ENCODE measurements at regions of chr16 and their contacts with region 1.

Region 1: DNA sequence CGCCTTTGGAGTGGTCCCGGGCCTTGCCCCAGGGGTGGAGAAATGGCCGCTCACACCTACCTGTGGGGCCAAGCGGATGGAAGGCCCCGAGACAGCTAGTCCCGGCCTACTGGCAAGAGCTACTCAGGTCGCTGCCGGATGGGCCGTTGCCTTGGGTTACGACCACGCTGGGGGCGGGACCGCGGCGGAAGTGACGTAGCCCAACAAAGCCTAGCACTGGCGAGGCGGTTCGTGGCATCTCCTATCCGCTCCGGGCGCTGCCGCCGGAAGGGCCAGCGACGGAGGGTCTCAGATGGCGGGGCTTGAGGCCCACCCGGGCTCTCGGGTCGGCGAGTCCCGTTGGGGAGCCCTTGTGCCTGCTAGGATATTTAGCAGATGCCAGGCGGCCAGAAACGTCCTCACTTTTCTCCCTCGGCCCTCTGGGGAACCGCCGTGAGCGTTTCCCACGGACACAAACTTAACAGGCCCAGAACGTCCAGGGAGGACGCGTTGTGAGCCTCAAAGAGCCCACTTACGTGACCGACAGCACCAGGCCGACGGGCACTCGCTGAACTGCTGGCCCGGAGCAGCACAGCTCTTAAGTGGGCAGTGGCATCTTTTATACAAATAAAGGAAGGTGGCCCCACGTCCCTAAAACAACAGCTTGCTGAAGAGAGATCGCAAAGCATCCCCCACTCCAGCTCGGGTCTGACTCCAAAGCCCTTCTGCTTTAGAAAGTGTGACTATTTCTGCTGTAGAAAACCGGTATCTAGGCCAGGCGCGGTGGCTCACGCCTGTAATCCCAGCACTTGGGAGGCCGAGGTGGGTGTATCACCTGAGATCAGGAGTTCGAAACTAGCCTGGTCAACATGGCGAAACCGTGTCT is at the start of gene C16orf46:
- DNase-seq: peak; percentile 99
- H3K4me3 Mint-ChIP-seq: peak within 1 kb of the TSS; percentile 32
- H3K27ac Mint-ChIP-seq: no peak within 1 kb of the TSS
- H3K4me1 Mint-ChIP-seq: peaks cover 3% of the 10 kb centered on the region
- H3K27me3 Mint-ChIP-seq: no peaks in the 10 kb centered on the region
- total RNA-seq, gene C16orf46: 0.44 to 0.86 TPM

Region 2: GRCh38 chr16:80899809-80900592 is 177.3 kb before region 1 on chr16:
- CTCF ChIA-PET with region 1: no interaction called
- POLR2A ChIA-PET with region 1: no interaction called
- intact Hi-C with region 1: no loop called
- DNase-seq: no peak
- H3K4me3 Mint-ChIP-seq: no peak overlapping the region
- H3K27ac Mint-ChIP-seq: no peak overlapping the region
- H3K4me1 Mint-ChIP-seq: no peaks in the 10 kb centered on the region
- H3K27me3 Mint-ChIP-seq: peaks cover 1% of the 10 kb centered on the region

Region 3: DNA sequence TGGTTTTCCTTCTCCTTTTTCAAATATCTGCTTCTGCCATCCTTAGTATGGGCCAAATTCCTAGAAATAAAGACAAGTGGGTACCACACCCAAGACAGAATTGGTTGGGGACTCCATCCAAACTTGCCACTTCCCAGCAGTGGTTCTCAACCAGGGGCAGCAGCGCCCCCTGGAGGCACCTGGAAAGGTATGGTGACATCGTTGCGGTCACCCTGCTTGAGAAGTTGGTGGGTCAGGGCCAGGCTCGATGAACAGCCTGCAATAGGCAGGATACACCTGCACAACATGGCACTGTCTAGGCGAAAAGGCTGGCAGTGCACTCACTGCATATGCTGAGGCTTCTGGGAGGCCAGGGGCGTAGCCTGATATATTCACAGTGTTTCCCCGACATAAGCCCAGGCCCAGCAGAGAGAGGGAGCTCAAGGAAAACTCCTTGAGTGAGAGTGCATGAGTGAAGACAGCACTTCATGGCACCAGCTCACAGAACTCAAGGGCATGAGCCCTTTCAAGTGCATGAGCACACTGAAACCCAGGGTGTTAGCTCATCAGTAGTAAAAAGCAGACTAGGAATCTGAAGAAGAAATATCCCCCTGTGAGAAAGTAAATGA is 128.3 kb before region 1 on chr16:
- CTCF ChIA-PET with region 1: no interaction called
- POLR2A ChIA-PET with region 1: no interaction called
- intact Hi-C with region 1: no loop called
- DNase-seq: peak; percentile 69
- H3K4me3 Mint-ChIP-seq: no peak overlapping the region
- H3K27ac Mint-ChIP-seq: no peak overlapping the region
- H3K4me1 Mint-ChIP-seq: peaks cover 22% of the 10 kb centered on the region
- H3K27me3 Mint-ChIP-seq: peaks cover 13% of the 10 kb centered on the region

Region 4: GRCh38 chr16:81006814-81007696 is 70.3 kb before region 1 on chr16 and contains the starts of genes CENPN and CMC2:
- CTCF ChIA-PET with region 1: interaction called, 3 read pairs
- POLR2A ChIA-PET with region 1: interaction called, 7 read pairs
- intact Hi-C with region 1: loop called (anchors 1 kb)
- DNase-seq: peak; percentile 98
- H3K4me3 Mint-ChIP-seq: peak within 1 kb of the TSS; percentile 88
- H3K27ac Mint-ChIP-seq: peak within 1 kb of the TSS; percentile 98
- H3K4me1 Mint-ChIP-seq: peaks cover 41% of the 10 kb centered on the region
- H3K27me3 Mint-ChIP-seq: no peaks in the 10 kb centered on the region
- total RNA-seq, gene CENPN: 71.9 to 76.0 TPM
- total RNA-seq, gene CMC2: 147 to 148 TPM

Region 5: DNA sequence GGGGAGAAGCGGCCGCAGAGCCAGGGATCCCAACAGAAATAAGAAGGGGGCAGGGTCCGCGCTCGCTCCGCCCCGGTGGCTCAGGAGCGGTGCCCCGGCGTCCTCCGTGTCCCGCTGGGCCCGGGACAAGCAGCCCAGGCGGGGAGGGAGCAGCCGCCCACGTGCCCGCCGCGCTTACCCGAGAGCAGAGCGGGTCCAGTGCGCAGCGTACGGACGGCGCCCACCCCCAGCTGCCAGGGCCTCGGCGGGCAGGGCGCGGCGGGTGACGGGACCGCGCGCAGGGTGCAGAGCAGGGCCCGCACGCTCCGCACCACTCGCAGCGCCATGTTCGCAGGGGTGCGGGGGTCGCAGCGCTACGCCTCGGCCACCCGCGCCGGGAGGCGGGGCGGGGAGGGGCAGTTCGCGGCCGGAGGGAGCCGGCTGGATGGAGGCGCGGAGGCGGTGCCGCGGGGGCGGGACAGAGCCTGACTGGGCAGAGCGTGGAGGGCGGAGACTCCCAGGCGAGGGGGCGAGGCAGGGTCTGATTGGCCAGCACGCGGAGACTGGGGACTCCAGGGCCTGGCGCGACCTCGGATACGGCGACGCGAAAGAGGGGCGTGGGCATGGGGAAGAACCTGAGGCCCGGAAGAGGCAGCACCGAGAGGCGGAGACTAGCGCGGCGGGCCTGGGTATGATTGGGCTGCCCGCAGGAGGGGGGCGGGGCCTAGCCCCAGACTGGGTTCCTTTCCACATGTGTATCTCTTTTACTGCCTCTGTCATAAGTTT is 18.8 kb after region 1 on chr16 and contains the start of gene GCSH:
- CTCF ChIA-PET with region 1: no interaction called
- POLR2A ChIA-PET with region 1: no interaction called
- intact Hi-C with region 1: loop called (anchors 1 kb)
- DNase-seq: peak; percentile 99
- H3K4me3 Mint-ChIP-seq: peak within 1 kb of the TSS; percentile 79
- H3K27ac Mint-ChIP-seq: peak within 1 kb of the TSS; percentile 70
- H3K4me1 Mint-ChIP-seq: peaks cover 14% of the 10 kb centered on the region
- H3K27me3 Mint-ChIP-seq: no peaks in the 10 kb centered on the region
- total RNA-seq, gene GCSH: 23.9 to 24.7 TPM